H1 (cell line): ENCODE measurements at regions of chr6 and their contacts with region 1.

Region 1: GRCh38 chr6:54717849-54718455 is 128.6 kb upstream of the FAM83B start:
- DNase-seq: peak in 1 of 2 experiments; percentile 79
- H3K4me3 ChIP-seq: no peak overlapping the region
- H3K27ac ChIP-seq: no peak overlapping the region
- H3K4me1 ChIP-seq: no peaks in the 10 kb centered on the region
- H3K27me3 ChIP-seq: no peaks in the 10 kb centered on the region
- CTCF ChIP-seq: peak in 2 of 3 experiments; percentile 54 to 73; a peak in 3 of 4 replicates
- EP300 ChIP-seq: no peak
- POLR2A ChIP-seq: no peak
- RAD21 ChIP-seq: peak; percentile 62 to 70

Region 2: GRCh38 chr6:54595844-54596243 is 122.1 kb before region 1 on chr6:
- CTCF ChIA-PET with region 1: no interaction called
- POLR2A ChIA-PET with region 1: no interaction called
- DNase-seq: no peak
- H3K4me3 ChIP-seq: no peak overlapping the region
- H3K27ac ChIP-seq: no peak overlapping the region
- H3K4me1 ChIP-seq: no peaks in the 10 kb centered on the region
- H3K27me3 ChIP-seq: no peaks in the 10 kb centered on the region
- CTCF ChIP-seq: no peak
- EP300 ChIP-seq: no peak
- POLR2A ChIP-seq: no peak
- RAD21 ChIP-seq: no peak

Region 3: GRCh38 chr6:54697424-54697823 is 20.5 kb before region 1 on chr6:
- CTCF ChIA-PET with region 1: interaction called, 30 read pairs
- POLR2A ChIA-PET with region 1: no interaction called
- DNase-seq: no peak
- H3K4me3 ChIP-seq: no peak overlapping the region
- H3K27ac ChIP-seq: no peak overlapping the region
- H3K4me1 ChIP-seq: 0 out of 7 replicates have a peak, but pooled peaks cover 0 to 1% (median 0%) of the 10 kb centered on the region in 4 experiments
- H3K27me3 ChIP-seq: peaks cover 0 to 3% (median 2%) of the 10 kb centered on the region in 4 experiments; a peak in 4 of 7 replicates
- CTCF ChIP-seq: peak in 2 of 3 experiments; percentile 21 to 32; a peak in 2 of 4 replicates
- EP300 ChIP-seq: no peak
- POLR2A ChIP-seq: no peak
- RAD21 ChIP-seq: peak; percentile 67 to 71

Region 4: GRCh38 chr6:54702772-54703171 is 15.2 kb before region 1 on chr6:
- CTCF ChIA-PET with region 1: interaction called, 54 read pairs
- POLR2A ChIA-PET with region 1: no interaction called
- DNase-seq: no peak
- H3K4me3 ChIP-seq: no peak overlapping the region
- H3K27ac ChIP-seq: no peak overlapping the region
- H3K4me1 ChIP-seq: peaks cover 0 to 5% (median 3%) of the 10 kb centered on the region in 4 experiments; a peak in 2 of 7 replicates
- H3K27me3 ChIP-seq: no peaks in the 10 kb centered on the region
- CTCF ChIP-seq: no peak
- EP300 ChIP-seq: no peak
- POLR2A ChIP-seq: no peak
- RAD21 ChIP-seq: no peak

Region 5: DNA sequence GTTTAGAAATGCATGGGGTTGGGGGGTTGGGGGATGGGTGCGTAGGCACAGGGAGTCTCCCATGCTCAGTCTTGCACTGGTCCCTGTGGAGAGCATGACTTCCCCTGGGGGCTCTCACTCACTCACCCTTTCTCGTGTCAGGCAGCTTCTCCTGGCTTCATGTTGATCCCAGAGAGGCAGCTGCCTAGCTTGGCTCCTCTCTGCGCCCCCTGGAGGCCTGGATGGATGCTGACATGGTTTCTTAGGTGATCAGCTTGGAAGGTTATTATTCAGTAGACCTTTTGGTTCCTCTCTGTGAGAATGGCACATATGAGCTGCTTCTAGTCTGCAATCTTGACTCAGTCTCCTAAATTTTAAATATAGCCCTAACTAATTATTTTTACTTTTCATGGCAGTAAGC is 19.3 kb after region 1 on chr6:
- CTCF ChIA-PET with region 1: interaction called, 25 read pairs
- POLR2A ChIA-PET with region 1: no interaction called
- DNase-seq: peak; percentile 17 to 72
- H3K4me3 ChIP-seq: no peak overlapping the region
- H3K27ac ChIP-seq: no peak overlapping the region
- H3K4me1 ChIP-seq: no peaks in the 10 kb centered on the region
- H3K27me3 ChIP-seq: no peaks in the 10 kb centered on the region
- CTCF ChIP-seq: peak; percentile 50 to 75 (median 71)
- EP300 ChIP-seq: no peak
- POLR2A ChIP-seq: no peak
- RAD21 ChIP-seq: peak; percentile 19 to 49; a peak in 3 of 4 replicates

Region 6: GRCh38 chr6:54747955-54748354 is 30.0 kb after region 1 on chr6:
- CTCF ChIA-PET with region 1: interaction called, 11 read pairs
- POLR2A ChIA-PET with region 1: no interaction called
- DNase-seq: no peak
- H3K4me3 ChIP-seq: no peak overlapping the region
- H3K27ac ChIP-seq: no peak overlapping the region
- H3K4me1 ChIP-seq: no peaks in the 10 kb centered on the region
- H3K27me3 ChIP-seq: no peaks in the 10 kb centered on the region
- CTCF ChIP-seq: no peak
- EP300 ChIP-seq: no peak
- POLR2A ChIP-seq: no peak
- RAD21 ChIP-seq: no peak

Region 7: GRCh38 chr6:54992789-54993188 is 274.8 kb after region 1 on chr6:
- CTCF ChIA-PET with region 1: interaction called, 25 read pairs
- POLR2A ChIA-PET with region 1: no interaction called
- DNase-seq: no peak
- H3K4me3 ChIP-seq: no peak overlapping the region
- H3K27ac ChIP-seq: no peak overlapping the region
- H3K4me1 ChIP-seq: no peaks in the 10 kb centered on the region
- H3K27me3 ChIP-seq: no peaks in the 10 kb centered on the region
- CTCF ChIP-seq: peak in 2 of 3 experiments; percentile 51 to 70; a peak in 3 of 4 replicates
- EP300 ChIP-seq: no peak
- POLR2A ChIP-seq: no peak
- RAD21 ChIP-seq: peak; percentile 76 to 77

Region 8: DNA sequence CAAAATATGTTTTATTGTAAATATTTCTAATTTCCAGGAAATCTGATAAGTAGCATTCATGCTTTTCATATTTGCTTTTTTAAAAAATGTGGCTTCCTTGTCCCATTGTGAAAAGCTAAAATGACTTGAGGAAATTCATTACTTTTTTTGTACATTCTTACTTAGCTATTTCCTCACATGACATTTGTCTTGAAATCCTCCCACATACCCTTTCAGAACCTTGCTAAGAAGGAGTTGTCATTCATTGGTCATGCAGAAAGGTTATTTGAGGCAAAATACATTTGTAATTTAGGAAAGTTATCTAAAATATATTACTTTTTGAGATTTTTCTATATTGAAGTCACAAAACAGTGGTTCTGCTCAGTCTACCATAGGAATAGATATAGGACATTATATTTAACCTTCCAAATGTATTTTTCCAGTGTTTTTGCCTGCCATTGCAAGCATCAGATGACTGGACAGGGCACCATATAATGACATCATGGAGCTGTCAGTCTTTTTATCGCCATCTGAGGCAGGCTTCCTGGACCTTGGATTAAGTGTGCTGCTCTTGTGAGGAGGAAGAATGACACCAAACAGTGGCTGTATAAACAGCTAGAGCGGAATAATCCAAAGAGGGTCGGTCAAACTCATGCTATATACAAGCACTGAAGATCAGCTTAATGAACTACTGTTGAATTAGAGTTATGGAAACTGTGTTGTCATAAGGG is 346.9 kb after region 1 on chr6:
- CTCF ChIA-PET with region 1: interaction called, 15 read pairs
- POLR2A ChIA-PET with region 1: no interaction called
- DNase-seq: no peak
- H3K4me3 ChIP-seq: no peak overlapping the region
- H3K27ac ChIP-seq: no peak overlapping the region
- H3K4me1 ChIP-seq: no peaks in the 10 kb centered on the region
- H3K27me3 ChIP-seq: no peaks in the 10 kb centered on the region
- CTCF ChIP-seq: no peak
- EP300 ChIP-seq: no peak
- POLR2A ChIP-seq: no peak
- RAD21 ChIP-seq: no peak